Left lung (tissue), 14 donors: ENCODE measurements at regions of chr1 and their contacts with region 1.

Region 1: DNA sequence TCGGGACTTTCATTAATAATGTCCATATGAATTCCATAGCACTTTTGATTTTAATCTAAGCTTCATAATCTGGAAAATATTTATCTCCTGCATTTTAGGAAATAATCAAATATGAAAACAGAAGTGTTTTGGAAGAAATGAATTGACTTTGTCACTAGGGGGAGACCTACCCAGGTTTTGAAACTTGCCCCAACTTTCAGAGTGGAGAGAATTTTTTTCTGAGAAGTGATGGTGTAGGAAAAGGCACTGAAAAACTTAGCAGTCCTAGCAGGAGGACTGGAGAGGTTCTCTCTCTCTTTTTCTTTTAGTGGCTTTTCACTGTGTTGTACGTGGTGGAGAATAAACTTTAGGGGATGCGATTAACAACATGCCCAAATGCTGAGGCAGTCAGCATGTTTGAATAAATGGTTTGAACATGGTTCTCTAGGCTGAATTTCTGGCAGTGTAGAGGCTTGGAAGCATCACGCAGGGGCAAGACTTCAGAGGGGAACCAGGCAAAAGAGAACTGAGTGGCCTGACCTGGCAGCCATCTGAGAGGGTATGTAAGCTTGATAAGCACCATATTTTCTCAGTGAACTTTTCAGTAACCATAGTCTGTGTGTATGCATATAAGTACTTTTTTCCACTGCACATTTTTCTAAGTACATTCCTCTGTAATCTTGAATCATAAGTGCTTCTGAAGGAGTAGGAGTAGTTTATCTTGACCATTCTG is 68.3 kb upstream of the NEK7 start:
- DNase-seq: peak in 3 of 4 donors; percentile 41 to 73 (median 61)
- ATAC-seq: peak; percentile 95
- H3K4me3 ChIP-seq: no peak overlapping the region
- H3K27ac ChIP-seq: peak overlapping the region; percentile 55 to 60
- H3K4me1 ChIP-seq: peaks cover 0 to 8% of the 10 kb centered on the region in 2 donors
- H3K27me3 ChIP-seq: no peaks in the 10 kb centered on the region
- CTCF ChIP-seq: peak; percentile 25 to 43

Region 2: DNA sequence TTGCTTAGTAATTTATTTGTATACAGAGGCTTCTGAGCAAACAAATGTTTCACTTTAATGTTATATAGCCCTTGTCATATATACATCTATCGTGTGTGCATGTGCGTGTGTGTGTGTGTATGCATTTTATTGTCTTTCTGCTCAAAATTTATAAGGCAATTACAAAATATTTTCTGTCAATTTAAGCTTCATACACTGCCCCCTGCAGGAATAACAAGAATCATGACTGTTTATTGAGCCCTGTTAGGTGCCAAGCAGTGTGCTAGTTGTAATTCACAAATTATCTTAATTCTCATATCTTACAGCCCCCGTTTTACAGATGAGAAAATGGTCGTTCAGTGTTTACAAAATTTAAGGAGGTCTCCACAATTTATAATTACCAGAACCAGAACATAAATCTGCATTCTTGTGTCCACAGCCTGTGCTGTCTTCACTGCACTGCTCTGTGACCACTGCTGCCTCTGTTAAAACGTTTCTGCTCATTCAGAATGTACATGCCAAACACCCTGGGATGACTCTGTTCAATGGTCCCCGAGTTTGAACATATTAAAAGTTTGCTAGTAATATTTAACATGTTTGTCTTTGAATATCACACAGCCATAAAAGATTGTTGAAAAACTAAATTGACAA is 270.6 kb after region 1 on chr1:
- intact Hi-C with region 1: loop called in 1 of 2 experiments (anchors 10 kb)
- DNase-seq: no peak
- ATAC-seq: no peak
- H3K4me3 ChIP-seq: no peak overlapping the region
- H3K27ac ChIP-seq: no peak overlapping the region
- H3K4me1 ChIP-seq: no peaks in the 10 kb centered on the region
- H3K27me3 ChIP-seq: no peaks in the 10 kb centered on the region
- CTCF ChIP-seq: peak; percentile 28 to 42